Left cardiac atrium (tissue), 4 donors: ENCODE measurements at regions of chr9 and their contacts with region 1.

Region 1: GRCh38 chr9:114155263-114155972 is at the start of gene COL27A1:
- DNase-seq: peak; percentile 85
- ATAC-seq: peak; percentile 87 to 88
- total RNA-seq, gene COL27A1: 7.0 to 9.2 TPM

Region 2: DNA sequence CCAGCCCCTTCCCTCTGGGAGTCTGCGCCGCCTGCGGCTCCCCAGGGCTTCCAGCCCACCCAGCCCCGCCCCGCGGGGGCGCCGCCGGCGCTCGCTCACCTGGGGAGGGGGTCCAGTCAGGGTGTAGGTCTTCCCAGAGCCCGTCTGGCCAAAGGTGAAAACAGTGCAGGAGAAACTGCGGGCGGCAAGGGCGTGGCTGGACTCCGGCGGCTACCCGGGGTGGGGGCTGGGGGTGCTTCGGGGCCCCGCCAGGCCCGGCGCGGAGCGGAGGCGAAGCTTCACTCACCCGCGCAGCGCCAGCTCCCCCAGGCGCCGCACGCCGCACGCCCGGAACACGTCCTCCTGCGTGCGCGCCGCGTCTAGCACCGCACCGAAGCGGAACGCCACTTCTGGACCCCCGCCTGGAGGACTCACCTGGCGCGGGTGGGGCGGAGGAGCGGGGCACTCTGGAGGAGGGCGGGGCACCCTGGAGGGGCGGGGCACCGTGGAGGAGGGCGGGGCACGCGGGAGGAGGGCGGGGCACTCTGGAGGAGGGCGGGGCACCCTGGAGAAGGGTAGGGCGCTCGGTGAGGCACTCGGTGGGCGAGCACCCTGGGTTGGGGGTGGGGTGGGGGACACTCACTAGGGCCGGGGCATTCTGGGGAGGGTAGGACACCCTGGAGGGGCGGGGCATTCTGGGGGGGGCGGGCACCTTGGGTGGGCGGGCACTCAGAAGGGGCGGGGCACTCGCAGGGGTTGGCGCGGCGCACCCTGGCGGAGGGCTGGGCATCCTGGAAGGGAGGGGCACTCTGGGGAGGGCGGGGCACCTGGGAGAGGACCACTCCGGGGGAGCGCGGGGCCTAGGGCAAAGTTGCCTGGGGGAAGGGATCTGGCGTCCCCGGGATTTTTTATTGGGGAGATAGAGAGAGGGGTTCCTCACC is 57.1 kb before region 1 on chr9:
- intact Hi-C with region 1: no loop called
- DNase-seq: peak; percentile 37
- ATAC-seq: peak; percentile 83 to 84

Region 3: GRCh38 chr9:114250235-114250568 is 94.8 kb after region 1 on chr9:
- intact Hi-C with region 1: loop called in 1 of 2 experiments (anchors 10 kb)
- DNase-seq: peak; percentile 82
- ATAC-seq: peak; percentile 93 to 95

Region 4: GRCh38 chr9:114271641-114272081 is 116.2 kb after region 1 on chr9:
- intact Hi-C with region 1: loop called (anchors 5 kb)
- DNase-seq: peak; percentile 61
- ATAC-seq: peak; percentile 53 to 70

Region 5: GRCh38 chr9:114291064-114291474 is 135.7 kb after region 1 on chr9:
- intact Hi-C with region 1: loop called in 1 of 2 experiments (anchors 5 kb)
- DNase-seq: peak; percentile 66
- ATAC-seq: peak; percentile 29 to 55